ENCODE measurements at regions of chr4 and their contacts with region 1.

Region 1: DNA sequence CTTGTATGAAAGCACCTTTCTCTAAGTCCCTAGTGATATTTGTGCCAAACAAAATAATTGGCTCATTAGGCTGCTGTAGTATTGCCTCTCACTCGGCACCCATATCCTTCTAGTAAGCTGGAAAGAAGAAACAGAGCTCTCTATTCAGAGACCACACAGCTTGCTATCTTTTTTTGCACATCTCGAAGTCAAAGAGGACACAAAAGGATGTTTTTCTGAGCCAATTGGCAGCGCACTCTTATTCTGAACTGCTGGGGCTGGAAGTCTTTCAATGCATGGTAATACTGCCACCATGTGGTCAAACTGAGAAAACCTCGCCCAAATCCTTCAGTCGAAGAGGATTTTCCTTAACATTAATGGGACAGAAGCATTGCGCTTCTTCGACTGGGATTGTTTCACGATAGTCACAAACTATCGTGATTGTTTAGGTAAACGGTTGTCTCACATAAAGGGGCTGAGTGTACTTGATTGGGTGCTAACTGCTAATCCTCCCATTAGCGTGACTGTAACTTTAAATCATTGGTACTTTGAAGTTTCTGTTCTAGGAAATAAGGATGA is 572.0 kb upstream of the LCORL start:
- DNase-seq: peak; percentile 80
- H3K4me3 ChIP-seq: no peak overlapping the region
- H3K27ac ChIP-seq: no peak overlapping the region
- H3K4me1 ChIP-seq: no peaks in the 10 kb centered on the region
- H3K27me3 ChIP-seq: no peaks in the 10 kb centered on the region
- CTCF ChIP-seq: peak; percentile 70 to 73
- POLR2A ChIP-seq: no peak

Region 2: DNA sequence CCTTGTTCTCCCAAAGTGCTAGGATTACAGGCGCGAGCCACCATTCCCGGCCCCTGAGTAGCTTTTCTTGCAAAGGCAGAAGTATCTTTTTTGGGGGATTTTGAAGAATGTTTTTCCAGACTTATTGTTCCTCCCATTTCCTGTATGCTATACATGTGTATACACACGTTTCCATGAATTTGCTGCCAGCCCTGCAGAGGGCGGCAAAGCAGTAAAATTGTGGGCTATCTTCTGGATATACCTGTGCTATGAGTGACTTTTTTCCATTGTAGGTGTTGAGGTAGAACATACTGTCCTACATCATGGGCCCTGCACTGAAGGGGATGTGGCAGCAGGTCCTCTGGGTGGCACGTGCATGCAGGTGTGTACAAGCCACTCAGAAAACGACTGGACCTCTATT is 996.0 kb before region 1 on chr4:
- CTCF ChIA-PET with region 1: interaction called, 3 read pairs
- POLR2A ChIA-PET with region 1: no interaction called
- dilution Hi-C with region 1: no loop called
- intact Hi-C with region 1: loop called (anchors 1 kb)
- DNase-seq: peak; percentile 48
- H3K4me3 ChIP-seq: no peak overlapping the region
- H3K27ac ChIP-seq: no peak overlapping the region
- H3K4me1 ChIP-seq: no peaks in the 10 kb centered on the region
- H3K27me3 ChIP-seq: no peaks in the 10 kb centered on the region
- CTCF ChIP-seq: peak; percentile 32 to 38
- POLR2A ChIP-seq: no peak

Region 3: DNA sequence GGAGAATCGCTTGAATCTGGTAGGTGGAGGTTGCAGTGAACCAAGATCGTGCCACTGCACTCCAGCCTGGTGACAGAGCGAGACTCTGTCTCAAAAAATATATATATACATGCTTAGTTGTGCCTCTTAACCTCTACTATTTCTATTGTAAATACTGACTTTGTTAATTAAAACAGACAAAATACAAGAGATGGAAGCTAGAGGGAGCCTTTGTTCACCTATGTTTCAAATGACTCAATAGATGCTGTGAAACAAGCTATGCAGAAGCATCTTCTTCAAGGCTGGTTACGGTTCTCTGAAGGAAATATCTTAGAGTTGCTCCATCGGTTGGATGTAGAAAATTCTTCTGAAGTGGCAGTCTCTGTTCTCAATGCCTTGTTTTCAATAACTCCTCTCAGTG is 776.5 kb before region 1 on chr4:
- CTCF ChIA-PET with region 1: interaction called, 20 read pairs
- POLR2A ChIA-PET with region 1: no interaction called
- dilution Hi-C with region 1: no loop called
- intact Hi-C with region 1: loop called (anchors 1 kb)
- DNase-seq: peak; percentile 75
- H3K4me3 ChIP-seq: no peak overlapping the region
- H3K27ac ChIP-seq: no peak overlapping the region
- H3K4me1 ChIP-seq: peaks cover 23% of the 10 kb centered on the region
- H3K27me3 ChIP-seq: no peaks in the 10 kb centered on the region
- CTCF ChIP-seq: peak; percentile 28 to 33
- POLR2A ChIP-seq: no peak

Region 4: GRCh38 chr4:18105030-18106011 is 488.2 kb before region 1 on chr4:
- CTCF ChIA-PET with region 1: no interaction called
- POLR2A ChIA-PET with region 1: no interaction called
- dilution Hi-C with region 1: no loop called
- intact Hi-C with region 1: no loop called
- DNase-seq: peak; percentile 57
- H3K4me3 ChIP-seq: no peak overlapping the region
- H3K27ac ChIP-seq: peak overlapping the region; percentile 46
- H3K4me1 ChIP-seq: peaks cover 36% of the 10 kb centered on the region
- H3K27me3 ChIP-seq: no peaks in the 10 kb centered on the region
- CTCF ChIP-seq: no peak
- POLR2A ChIP-seq: no peak

Region 5: DNA sequence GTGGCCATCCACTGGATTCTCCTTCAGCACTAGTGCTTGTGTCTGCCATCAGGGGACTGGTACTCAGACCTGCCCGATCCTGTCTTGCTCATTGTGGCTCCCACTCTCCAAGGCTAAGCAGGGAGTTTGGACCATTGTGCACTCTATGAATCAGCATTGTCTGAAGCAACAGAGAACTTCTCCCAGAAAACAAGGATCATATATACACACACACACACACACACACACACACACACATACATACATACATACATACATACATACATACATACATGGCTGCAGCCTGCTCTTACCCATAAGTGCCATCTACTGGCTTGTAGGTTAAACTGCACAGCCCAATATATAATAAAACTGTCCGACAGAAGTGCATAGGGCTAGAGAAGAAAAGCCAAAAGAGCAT is 226.6 kb before region 1 on chr4:
- CTCF ChIA-PET with region 1: interaction called, 5 read pairs
- POLR2A ChIA-PET with region 1: no interaction called
- dilution Hi-C with region 1: no loop called
- intact Hi-C with region 1: loop called (anchors 2 kb)
- DNase-seq: peak; percentile 51
- H3K4me3 ChIP-seq: no peak overlapping the region
- H3K27ac ChIP-seq: no peak overlapping the region
- H3K4me1 ChIP-seq: no peaks in the 10 kb centered on the region
- H3K27me3 ChIP-seq: no peaks in the 10 kb centered on the region
- CTCF ChIP-seq: peak; percentile 34 to 52
- POLR2A ChIP-seq: no peak

Region 6: GRCh38 chr4:19146038-19146437 is 552.5 kb after region 1 on chr4:
- CTCF ChIA-PET with region 1: no interaction called
- POLR2A ChIA-PET with region 1: no interaction called
- dilution Hi-C with region 1: no loop called
- intact Hi-C with region 1: no loop called
- DNase-seq: no peak
- H3K4me3 ChIP-seq: no peak overlapping the region
- H3K27ac ChIP-seq: no peak overlapping the region
- H3K4me1 ChIP-seq: no peaks in the 10 kb centered on the region
- H3K27me3 ChIP-seq: no peaks in the 10 kb centered on the region
- CTCF ChIP-seq: no peak
- POLR2A ChIP-seq: no peak

Measured in endothelial cell of umbilical vein (primary cell).